ENCODE measurements at regions of chr2 and their contacts with region 1.

Region 1: GRCh38 chr2:213151437-213152064 is at the start of gene IKZF2:
- DNase-seq: peak; percentile 84 to 90 (median 85)
- H3K4me3 ChIP-seq: peak within 1 kb of the TSS; percentile 49 to 100 (median 90)
- H3K27ac ChIP-seq: peak within 1 kb of the TSS; percentile 75 to 97 (median 96)
- H3K4me1 ChIP-seq: peaks cover 6 to 20% of the 10 kb centered on the region in 2 donors
- H3K27me3 ChIP-seq: no peaks in the 10 kb centered on the region
- CTCF ChIP-seq: no peak
- POLR2A ChIP-seq: peak; percentile 23 to 82
- total RNA-seq, gene IKZF2: 1.4 to 18.9 (median 9.6) TPM

Region 2: GRCh38 chr2:212686285-212686895 is 465.2 kb before region 1 on chr2:
- intact Hi-C with region 1: loop called in 1 of 2 experiments (anchors 5 kb)
- DNase-seq: peak; percentile 33 to 85 (median 69)
- H3K4me3 ChIP-seq: no peak overlapping the region
- H3K27ac ChIP-seq: no peak overlapping the region
- H3K4me1 ChIP-seq: no peaks in the 10 kb centered on the region
- H3K27me3 ChIP-seq: no peaks in the 10 kb centered on the region
- CTCF ChIP-seq: peak; percentile 68 to 95 (median 78)
- POLR2A ChIP-seq: no peak

Region 3: DNA sequence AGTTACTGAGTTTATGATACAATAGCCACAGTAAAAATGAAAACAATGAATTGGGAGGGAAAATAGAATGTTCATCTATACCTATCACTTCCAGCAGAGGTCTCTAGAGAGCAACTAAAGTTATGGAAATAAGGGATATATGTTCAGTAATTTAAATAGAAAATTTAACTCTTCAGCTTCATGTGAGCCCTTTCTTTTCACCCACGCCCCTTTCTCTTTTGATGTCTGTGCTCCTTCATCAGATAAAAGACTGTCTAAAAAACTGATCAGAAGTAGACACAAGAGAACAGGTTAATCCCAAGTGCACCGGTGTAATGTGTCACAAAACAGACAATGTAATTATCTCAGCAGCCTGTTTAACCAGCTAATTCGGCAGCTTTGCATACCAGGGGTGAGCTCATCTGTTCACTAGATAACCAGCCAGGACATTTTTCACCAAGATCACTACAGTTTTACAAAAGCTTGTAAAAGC is 374.5 kb before region 1 on chr2:
- intact Hi-C with region 1: loop called (anchors 5 kb)
- DNase-seq: no peak
- H3K4me3 ChIP-seq: no peak overlapping the region
- H3K27ac ChIP-seq: no peak overlapping the region
- H3K4me1 ChIP-seq: no peaks in the 10 kb centered on the region
- H3K27me3 ChIP-seq: no peaks in the 10 kb centered on the region
- CTCF ChIP-seq: peak; percentile 37 to 71 (median 61)
- POLR2A ChIP-seq: no peak